ENCODE measurements at regions of chr2 and their contacts with region 1.

Region 1: GRCh38 chr2:189661148-189661956 is at the start of gene ASNSD1:
- DNase-seq: peak; percentile 97
- ATAC-seq: peak; percentile 95
- H3K4me3 Mint-ChIP-seq: no peak within 1 kb of the TSS
- H3K27ac Mint-ChIP-seq: no peak within 1 kb of the TSS
- H3K4me1 Mint-ChIP-seq: peaks cover 25% of the 10 kb centered on the region
- H3K27me3 Mint-ChIP-seq: no peaks in the 10 kb centered on the region
- CTCF ChIP-seq: peak; percentile 97
- total RNA-seq, gene ASNSD1: 27.5 and 31.1 TPM in 2 replicates

Region 2: DNA sequence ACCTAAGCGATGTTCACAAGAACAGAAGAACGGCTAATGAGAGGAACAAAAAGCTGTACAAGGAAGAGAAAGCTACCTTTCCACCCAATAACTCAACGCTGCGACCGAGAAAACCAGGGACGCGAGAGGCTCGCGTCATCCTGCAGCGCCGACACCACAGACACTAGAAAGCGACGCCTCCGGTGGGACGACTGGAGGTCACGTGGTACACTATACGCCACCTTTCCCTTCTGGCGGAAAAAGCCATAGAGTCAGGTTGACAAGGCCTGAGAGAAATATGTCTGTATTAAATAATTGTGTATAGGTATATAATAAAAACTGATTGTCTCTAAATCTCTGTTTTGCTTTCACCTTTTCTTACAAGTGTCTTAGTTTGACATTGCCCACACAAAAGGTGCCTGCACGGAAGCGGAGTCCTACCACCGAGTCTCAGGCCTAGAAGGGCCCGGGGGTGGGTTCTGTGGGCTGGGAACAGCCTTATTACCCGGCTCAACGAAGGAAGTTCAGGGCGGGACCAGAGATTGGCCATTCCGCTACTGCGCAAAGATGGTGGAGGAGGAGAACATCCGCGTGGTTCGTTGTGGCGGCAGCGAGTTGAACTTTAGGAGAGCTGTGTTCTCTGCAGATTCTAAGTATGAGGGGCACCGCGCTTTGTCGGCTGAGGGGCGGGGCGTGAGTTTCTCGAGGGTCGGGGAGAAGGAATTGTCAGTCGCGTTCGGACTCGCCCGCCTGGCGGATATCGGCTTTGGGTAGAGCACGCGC is 220.2 kb before region 1 on chr2 and contains the start of gene WDR75:
- CTCF ChIA-PET with region 1: no interaction called
- POLR2A ChIA-PET with region 1: no interaction called
- intact Hi-C with region 1: loop called (anchors 1 kb)
- DNase-seq: peak; percentile 79
- ATAC-seq: peak; percentile 94
- H3K4me3 Mint-ChIP-seq: peak within 1 kb of the TSS; percentile 98
- H3K27ac Mint-ChIP-seq: peak within 1 kb of the TSS; percentile 99
- H3K4me1 Mint-ChIP-seq: peaks cover 26% of the 10 kb centered on the region
- H3K27me3 Mint-ChIP-seq: no peaks in the 10 kb centered on the region
- CTCF ChIP-seq: no peak
- total RNA-seq, gene WDR75: 53.0 and 61.2 TPM in 2 replicates

Region 3: DNA sequence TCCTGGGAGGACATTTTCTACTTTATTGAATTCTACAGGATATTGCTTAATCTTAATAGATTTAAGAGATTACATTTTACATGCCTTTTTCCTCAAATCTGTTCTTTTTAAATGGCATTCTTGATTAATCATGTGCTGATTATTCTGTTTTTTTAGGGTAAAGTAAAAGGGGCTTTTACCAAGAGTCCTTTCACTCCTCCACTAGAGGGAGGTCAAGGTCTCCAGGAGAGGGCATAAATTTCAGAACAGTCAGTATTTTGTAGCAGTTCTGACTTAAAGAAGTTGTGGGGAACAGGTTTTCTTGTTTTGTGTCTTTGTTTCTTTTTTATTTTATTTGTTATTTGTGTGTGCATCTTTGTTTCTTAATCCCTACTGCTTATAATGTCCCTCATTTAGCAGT is 194.7 kb before region 1 on chr2:
- CTCF ChIA-PET with region 1: no interaction called
- POLR2A ChIA-PET with region 1: no interaction called
- intact Hi-C with region 1: no loop called
- DNase-seq: no peak
- ATAC-seq: no peak
- H3K4me3 Mint-ChIP-seq: no peak overlapping the region
- H3K27ac Mint-ChIP-seq: no peak overlapping the region
- H3K4me1 Mint-ChIP-seq: peaks cover 20% of the 10 kb centered on the region
- H3K27me3 Mint-ChIP-seq: no peaks in the 10 kb centered on the region
- CTCF ChIP-seq: no peak

Region 4: GRCh38 chr2:189751080-189751658 is 89.8 kb after region 1 on chr2:
- CTCF ChIA-PET with region 1: no interaction called
- POLR2A ChIA-PET with region 1: no interaction called
- intact Hi-C with region 1: loop called (anchors 1 kb)
- DNase-seq: no peak
- ATAC-seq: peak; percentile 56
- H3K4me3 Mint-ChIP-seq: no peak overlapping the region
- H3K27ac Mint-ChIP-seq: no peak overlapping the region
- H3K4me1 Mint-ChIP-seq: no peaks in the 10 kb centered on the region
- H3K27me3 Mint-ChIP-seq: no peaks in the 10 kb centered on the region
- CTCF ChIP-seq: no peak

Region 5: GRCh38 chr2:189952536-189953109 is 291.3 kb after region 1 on chr2:
- CTCF ChIA-PET with region 1: no interaction called
- POLR2A ChIA-PET with region 1: no interaction called
- intact Hi-C with region 1: loop called (anchors 2 kb)
- DNase-seq: no peak
- ATAC-seq: peak; percentile 70
- H3K4me3 Mint-ChIP-seq: peak overlapping the region; percentile 54
- H3K27ac Mint-ChIP-seq: peak overlapping the region; percentile 80
- H3K4me1 Mint-ChIP-seq: peaks cover 33% of the 10 kb centered on the region
- H3K27me3 Mint-ChIP-seq: no peaks in the 10 kb centered on the region
- CTCF ChIP-seq: no peak

Region 6: DNA sequence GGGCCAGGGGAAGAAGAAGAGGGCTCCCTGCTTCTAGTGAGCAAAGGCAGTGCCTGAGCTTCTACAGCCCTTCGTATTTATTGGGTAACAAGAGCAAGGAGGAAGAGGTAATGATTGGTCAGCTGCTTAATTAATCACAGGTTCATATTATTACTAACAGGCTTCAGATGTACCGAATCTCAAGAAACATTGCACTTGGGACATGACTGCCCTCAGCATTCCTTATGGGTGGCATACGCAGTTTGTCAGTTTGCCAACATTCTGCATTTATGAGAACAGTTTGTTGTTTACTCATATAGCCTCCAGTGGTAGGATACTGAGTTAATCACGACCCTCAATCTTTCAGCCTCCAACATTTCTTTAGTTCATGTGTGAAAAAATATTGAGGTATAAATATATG is 573.7 kb after region 1 on chr2:
- CTCF ChIA-PET with region 1: no interaction called
- POLR2A ChIA-PET with region 1: no interaction called
- intact Hi-C with region 1: no loop called
- DNase-seq: no peak
- ATAC-seq: no peak
- H3K4me3 Mint-ChIP-seq: no peak overlapping the region
- H3K27ac Mint-ChIP-seq: no peak overlapping the region
- H3K4me1 Mint-ChIP-seq: no peaks in the 10 kb centered on the region
- H3K27me3 Mint-ChIP-seq: no peaks in the 10 kb centered on the region
- CTCF ChIP-seq: no peak

Region 7: GRCh38 chr2:190319555-190320498 is 658.5 kb after region 1 on chr2 and contains the start of gene HIBCH:
- CTCF ChIA-PET with region 1: interaction called, 3 read pairs
- POLR2A ChIA-PET with region 1: no interaction called
- intact Hi-C with region 1: loop called (anchors 1 kb)
- DNase-seq: peak; percentile 82
- ATAC-seq: peak; percentile 94
- H3K4me3 Mint-ChIP-seq: peak within 1 kb of the TSS; percentile 96
- H3K27ac Mint-ChIP-seq: peak within 1 kb of the TSS; percentile 94
- H3K4me1 Mint-ChIP-seq: peaks cover 46% of the 10 kb centered on the region
- H3K27me3 Mint-ChIP-seq: peaks cover 2% of the 10 kb centered on the region
- CTCF ChIP-seq: no peak
- total RNA-seq, gene HIBCH: 16.3 and 21.2 TPM in 2 replicates

Region 8: GRCh38 chr2:191020221-191020741 is 1358.9 kb after region 1 on chr2:
- CTCF ChIA-PET with region 1: no interaction called
- POLR2A ChIA-PET with region 1: no interaction called
- intact Hi-C with region 1: loop called (anchors 5 kb)
- DNase-seq: peak; percentile 97
- ATAC-seq: peak; percentile 83
- H3K4me3 Mint-ChIP-seq: no peak overlapping the region
- H3K27ac Mint-ChIP-seq: no peak overlapping the region
- H3K4me1 Mint-ChIP-seq: peaks cover 10% of the 10 kb centered on the region
- H3K27me3 Mint-ChIP-seq: no peaks in the 10 kb centered on the region
- CTCF ChIP-seq: no peak

Region 9: DNA sequence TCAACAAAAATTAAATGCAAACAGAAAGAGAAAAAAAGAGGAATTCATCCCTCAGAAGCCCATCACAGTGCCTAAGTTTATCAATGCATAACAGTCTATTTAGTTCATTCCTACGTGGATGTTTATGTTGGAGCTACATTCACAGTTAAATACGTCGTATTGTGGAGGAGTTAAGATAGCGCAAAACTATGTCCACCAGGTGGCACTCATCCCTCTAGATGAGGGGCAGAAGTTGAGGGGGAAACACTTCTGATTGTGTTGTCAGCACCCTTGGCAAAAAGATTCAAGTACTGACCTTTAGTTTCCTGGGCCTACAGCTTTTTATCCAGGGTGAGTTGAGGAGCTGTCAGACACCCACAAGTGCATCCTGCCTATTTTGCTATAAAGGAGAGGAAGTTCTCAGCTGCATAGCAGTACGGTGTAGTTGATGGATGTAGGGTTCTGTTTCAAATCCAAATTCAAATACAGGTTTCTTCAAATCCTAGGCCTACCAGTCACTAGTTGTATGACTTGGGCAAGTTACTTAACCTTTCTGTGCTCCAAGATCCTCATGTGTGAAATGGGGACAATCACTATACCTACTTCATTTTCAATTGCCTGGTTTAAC is 1557.0 kb after region 1 on chr2:
- CTCF ChIA-PET with region 1: no interaction called
- POLR2A ChIA-PET with region 1: no interaction called
- intact Hi-C with region 1: no loop called
- DNase-seq: no peak
- ATAC-seq: peak; percentile 75
- H3K4me3 Mint-ChIP-seq: no peak overlapping the region
- H3K27ac Mint-ChIP-seq: no peak overlapping the region
- H3K4me1 Mint-ChIP-seq: peaks cover 10% of the 10 kb centered on the region
- H3K27me3 Mint-ChIP-seq: peaks cover 2% of the 10 kb centered on the region
- CTCF ChIP-seq: no peak

Measured in activated B cell treated with CpG ODN at 0.5 μM for 24 hours (primary cell).